GM12878 (cell line): ENCODE measurements at regions of chr2 and their contacts with region 1.

Region 1: DNA sequence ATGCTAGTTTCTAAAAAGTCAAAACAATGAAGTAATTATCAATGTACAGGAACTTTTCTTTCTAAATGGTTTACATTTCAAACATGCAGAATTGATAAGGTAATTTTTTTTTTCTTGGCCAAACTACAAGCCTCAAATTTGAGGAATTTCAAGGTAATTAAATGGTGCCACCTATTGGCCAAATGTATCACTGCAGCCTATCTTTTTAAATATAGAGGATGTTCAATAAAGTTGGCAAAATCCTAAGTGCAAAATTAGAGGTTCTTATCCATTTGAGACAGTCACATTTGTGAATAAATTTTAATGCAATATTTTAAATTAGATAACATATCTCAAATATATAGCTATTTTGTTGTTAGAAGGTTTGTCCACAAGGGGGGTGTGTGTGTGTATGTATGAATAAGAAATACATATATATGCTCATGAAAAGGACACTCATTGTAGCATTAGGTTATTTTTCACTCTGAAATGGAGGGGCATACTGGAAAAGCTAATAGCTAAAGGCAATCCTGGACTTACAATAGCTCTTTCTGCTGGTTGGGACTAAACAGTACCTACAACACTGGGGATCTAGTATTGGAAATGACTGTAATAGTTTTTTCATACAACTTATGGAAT is 26.2 kb downstream of the MMADHC start:
- DNase-seq: no peak
- ATAC-seq: peak; percentile 57
- H3K4me3 ChIP-seq: no peak overlapping the region
- H3K27ac ChIP-seq: no peak overlapping the region
- H3K4me1 ChIP-seq: no peaks in the 10 kb centered on the region
- H3K27me3 ChIP-seq: no peaks in the 10 kb centered on the region
- CTCF ChIP-seq: peak; percentile 58 to 78 (median 74)
- EP300 ChIP-seq: no peak
- POLR2A ChIP-seq: no peak
- RAD21 ChIP-seq: peak; percentile 88

Region 2: GRCh38 chr2:148926291-148926961 is 635.0 kb before region 1 on chr2:
- CTCF ChIA-PET with region 1: interaction called, 4 read pairs
- POLR2A ChIA-PET with region 1: no interaction called
- RAD21 ChIA-PET with region 1: no interaction called
- SMC1A ChIA-PET with region 1: no interaction called
- in situ Hi-C with region 1: no loop called
- intact Hi-C with region 1: loop called (anchors 5 kb)
- DNase-seq: peak; percentile 9
- ATAC-seq: peak; percentile 96
- H3K4me3 ChIP-seq: 0 out of 2 replicates have a peak overlapping the region, but pooled peaks have one; percentile 24
- H3K27ac ChIP-seq: no peak overlapping the region
- H3K4me1 ChIP-seq: no peaks in the 10 kb centered on the region
- H3K27me3 ChIP-seq: no peaks in the 10 kb centered on the region; a peak in 1 of 4 replicates
- CTCF ChIP-seq: peak; percentile 76 to 82 (median 80)
- EP300 ChIP-seq: no peak
- POLR2A ChIP-seq: no peak
- RAD21 ChIP-seq: peak; percentile 79

Region 3: DNA sequence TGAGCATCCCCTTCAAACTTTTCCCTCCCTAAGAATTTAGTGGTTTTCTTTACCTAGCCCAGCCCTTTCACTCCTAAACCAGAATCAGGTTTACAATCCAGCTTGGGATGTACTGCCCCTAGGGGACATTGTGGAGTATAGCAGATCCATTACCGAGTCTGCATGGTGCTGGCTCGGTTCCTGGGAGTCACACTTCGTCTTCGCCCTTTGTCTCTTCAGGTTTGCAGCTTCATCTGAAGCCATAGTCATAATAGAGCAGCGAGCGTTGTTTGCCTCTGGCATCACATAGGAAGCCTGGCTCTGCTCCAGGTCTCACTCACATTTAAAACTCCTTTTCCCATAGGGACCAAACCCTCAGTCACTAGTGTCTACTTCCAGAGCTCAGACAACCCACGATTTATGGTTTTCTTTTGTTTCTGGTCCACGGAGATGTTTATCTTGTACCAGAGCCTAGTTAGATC is 247.9 kb before region 1 on chr2:
- CTCF ChIA-PET with region 1: interaction called, 3 read pairs
- POLR2A ChIA-PET with region 1: no interaction called
- RAD21 ChIA-PET with region 1: no interaction called
- SMC1A ChIA-PET with region 1: interaction called, 4 read pairs
- in situ Hi-C with region 1: no loop called
- intact Hi-C with region 1: loop called (anchors 5 kb)
- DNase-seq: peak; percentile 9
- ATAC-seq: peak; percentile 94
- H3K4me3 ChIP-seq: no peak overlapping the region
- H3K27ac ChIP-seq: no peak overlapping the region
- H3K4me1 ChIP-seq: no peaks in the 10 kb centered on the region
- H3K27me3 ChIP-seq: no peaks in the 10 kb centered on the region
- CTCF ChIP-seq: peak; percentile 61 to 80 (median 77)
- EP300 ChIP-seq: no peak
- POLR2A ChIP-seq: no peak
- RAD21 ChIP-seq: peak; percentile 77

Region 4: DNA sequence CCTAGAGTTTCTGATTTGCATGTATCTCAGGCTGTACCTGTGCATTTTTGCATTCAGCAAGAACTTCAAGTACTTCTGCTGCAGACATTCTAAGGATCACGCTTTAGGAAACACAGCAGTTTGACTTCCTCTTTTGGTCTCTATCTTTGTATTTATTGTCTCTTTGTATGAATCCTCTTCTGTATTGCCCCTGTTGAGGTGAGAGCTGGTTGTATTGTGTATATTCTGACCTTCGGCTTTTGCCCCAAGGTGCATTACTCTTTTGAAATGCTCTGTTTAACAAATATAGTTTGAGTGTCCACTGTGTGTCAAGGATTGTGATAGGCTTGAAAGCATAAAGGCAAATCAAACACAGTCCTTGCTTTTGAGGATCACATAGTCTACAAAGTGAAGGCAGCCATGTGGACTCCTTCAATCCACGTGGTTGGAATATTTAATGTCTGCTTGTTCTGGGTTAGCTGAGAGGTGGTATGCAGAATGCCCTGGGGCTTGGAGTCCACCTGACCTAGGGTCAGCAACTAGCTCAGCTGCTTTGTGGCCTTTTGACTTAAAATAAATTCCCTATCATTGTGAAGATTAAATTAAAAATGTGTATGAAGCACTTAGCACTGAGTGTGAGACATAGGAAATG is 123.0 kb before region 1 on chr2:
- CTCF ChIA-PET with region 1: interaction called, 3 read pairs
- POLR2A ChIA-PET with region 1: no interaction called
- RAD21 ChIA-PET with region 1: no interaction called
- SMC1A ChIA-PET with region 1: no interaction called
- in situ Hi-C with region 1: no loop called
- intact Hi-C with region 1: loop called (anchors 5 kb)
- DNase-seq: no peak
- ATAC-seq: peak; percentile 55; the same call in 2 of the 3 replicates
- H3K4me3 ChIP-seq: no peak overlapping the region
- H3K27ac ChIP-seq: no peak overlapping the region
- H3K4me1 ChIP-seq: no peaks in the 10 kb centered on the region
- H3K27me3 ChIP-seq: no peaks in the 10 kb centered on the region
- CTCF ChIP-seq: no peak
- EP300 ChIP-seq: no peak
- POLR2A ChIP-seq: no peak
- RAD21 ChIP-seq: no peak

Region 5: DNA sequence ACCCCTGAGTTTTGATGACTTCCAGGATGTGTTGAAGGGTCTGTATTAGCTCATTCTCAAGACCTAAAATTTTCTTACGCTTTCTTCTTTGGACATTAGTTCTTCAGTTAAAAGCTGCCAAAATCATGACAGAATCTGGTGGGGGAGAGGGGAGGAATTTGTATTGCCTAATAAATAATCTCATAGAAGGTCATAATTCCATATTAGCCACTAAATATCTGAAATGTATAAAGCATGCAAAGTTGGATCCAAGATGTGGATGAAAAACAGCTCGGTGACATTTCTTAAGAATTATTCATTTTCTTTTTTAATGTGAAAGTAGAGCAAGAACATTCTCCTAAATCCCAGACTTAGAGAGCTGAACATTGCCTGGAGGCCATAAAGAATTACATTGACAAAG is 94.0 kb before region 1 on chr2:
- CTCF ChIA-PET with region 1: no interaction called
- POLR2A ChIA-PET with region 1: no interaction called
- RAD21 ChIA-PET with region 1: no interaction called
- SMC1A ChIA-PET with region 1: no interaction called
- in situ Hi-C with region 1: no loop called
- intact Hi-C with region 1: no loop called
- DNase-seq: no peak
- ATAC-seq: no peak
- H3K4me3 ChIP-seq: no peak overlapping the region
- H3K27ac ChIP-seq: no peak overlapping the region
- H3K4me1 ChIP-seq: no peaks in the 10 kb centered on the region; the same call in 1 of the 2 replicates
- H3K27me3 ChIP-seq: no peaks in the 10 kb centered on the region
- CTCF ChIP-seq: no peak
- EP300 ChIP-seq: no peak
- POLR2A ChIP-seq: no peak
- RAD21 ChIP-seq: no peak